Activated CD4-positive, alpha-beta T cell treated with anti-CD3 and anti-CD28 coated beads for 36 hours (primary cell): ENCODE measurements at regions of chr16 and their contacts with region 1.

Region 1: DNA sequence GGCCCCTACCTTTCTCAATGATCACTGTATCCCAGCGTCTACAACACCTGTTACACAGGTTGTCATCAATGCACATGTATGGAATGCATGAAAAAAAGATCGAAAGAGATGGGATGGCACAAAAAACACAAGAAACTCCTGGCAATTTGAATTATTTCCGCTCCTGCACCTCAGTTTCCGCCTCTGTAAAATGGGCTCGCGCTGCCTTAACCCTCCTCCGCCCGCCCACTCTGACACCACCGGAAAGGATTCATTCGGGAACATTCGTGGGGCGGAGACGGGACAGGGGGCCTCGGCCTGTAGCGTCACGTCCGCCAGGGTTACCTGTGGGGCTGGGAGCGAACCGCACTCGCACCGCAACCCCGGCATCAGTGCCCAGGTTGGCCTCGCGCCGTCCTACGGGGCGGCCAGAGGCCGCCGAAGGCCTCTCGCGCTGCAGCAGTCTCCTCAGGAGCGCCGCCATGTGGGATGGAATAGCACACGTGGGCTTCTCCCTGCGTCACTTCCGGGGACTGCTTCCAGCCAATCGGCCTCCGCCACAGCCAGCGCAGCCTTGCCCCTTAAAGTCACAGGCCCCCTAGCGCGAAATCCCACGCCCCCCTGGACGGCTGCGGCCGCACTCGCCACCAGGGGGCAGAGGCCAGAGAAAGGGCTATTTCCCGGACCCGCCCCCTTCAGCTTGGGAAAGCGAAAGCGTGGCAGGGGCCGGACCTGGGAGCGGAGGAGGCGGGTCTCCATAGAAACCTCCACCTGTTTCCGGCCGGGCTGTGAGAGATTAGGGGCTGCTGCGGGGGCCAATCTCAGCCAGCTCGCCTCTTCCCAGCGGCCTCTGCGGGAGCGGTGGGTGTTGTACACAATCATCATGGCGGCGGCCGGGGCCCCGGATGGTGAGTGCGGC is at the starts of genes EARS2 and UBFD1:
- DNase-seq: peak; percentile 99
- ATAC-seq: peak; percentile 92
- H3K4me3 Mint-ChIP-seq: peak within 1 kb of the TSS; percentile 94
- H3K27ac Mint-ChIP-seq: peak within 1 kb of the TSS; percentile 94
- H3K4me1 Mint-ChIP-seq: peaks cover 34% of the 10 kb centered on the region
- H3K27me3 Mint-ChIP-seq: no peaks in the 10 kb centered on the region
- total RNA-seq, gene EARS2: 26.6 to 31.9 TPM
- total RNA-seq, gene UBFD1: 56.8 to 57.2 TPM

Region 2: GRCh38 chr16:23149349-23149996 is 407.7 kb before region 1 on chr16 and contains the start of gene USP31:
- CTCF ChIA-PET with region 1: no interaction called
- POLR2A ChIA-PET with region 1: no interaction called
- intact Hi-C with region 1: loop called in 1 of 2 experiments (anchors 1 kb)
- DNase-seq: peak; percentile 94
- ATAC-seq: peak; percentile 99
- H3K4me3 Mint-ChIP-seq: peak within 1 kb of the TSS; percentile 86
- H3K27ac Mint-ChIP-seq: peak within 1 kb of the TSS; percentile 86
- H3K4me1 Mint-ChIP-seq: peaks cover 28% of the 10 kb centered on the region
- H3K27me3 Mint-ChIP-seq: no peaks in the 10 kb centered on the region
- total RNA-seq, gene USP31: 5.3 to 5.9 TPM

Region 3: GRCh38 chr16:23504451-23505179 is 52.5 kb before region 1 on chr16:
- CTCF ChIA-PET with region 1: no interaction called
- POLR2A ChIA-PET with region 1: interaction called, 5 read pairs
- intact Hi-C with region 1: loop called (anchors 1 to 2 kb)
- DNase-seq: peak; percentile 92
- ATAC-seq: peak; percentile 94
- H3K4me3 Mint-ChIP-seq: peak overlapping the region; percentile 26
- H3K27ac Mint-ChIP-seq: peak overlapping the region; percentile 83
- H3K4me1 Mint-ChIP-seq: peaks cover 77% of the 10 kb centered on the region
- H3K27me3 Mint-ChIP-seq: no peaks in the 10 kb centered on the region

Region 4: GRCh38 chr16:23515881-23516280 is 41.2 kb before region 1 on chr16:
- CTCF ChIA-PET with region 1: no interaction called
- POLR2A ChIA-PET with region 1: no interaction called
- intact Hi-C with region 1: no loop called
- DNase-seq: no peak
- ATAC-seq: no peak
- H3K4me3 Mint-ChIP-seq: no peak overlapping the region
- H3K27ac Mint-ChIP-seq: no peak overlapping the region
- H3K4me1 Mint-ChIP-seq: peaks cover 22% of the 10 kb centered on the region
- H3K27me3 Mint-ChIP-seq: no peaks in the 10 kb centered on the region

Region 5: DNA sequence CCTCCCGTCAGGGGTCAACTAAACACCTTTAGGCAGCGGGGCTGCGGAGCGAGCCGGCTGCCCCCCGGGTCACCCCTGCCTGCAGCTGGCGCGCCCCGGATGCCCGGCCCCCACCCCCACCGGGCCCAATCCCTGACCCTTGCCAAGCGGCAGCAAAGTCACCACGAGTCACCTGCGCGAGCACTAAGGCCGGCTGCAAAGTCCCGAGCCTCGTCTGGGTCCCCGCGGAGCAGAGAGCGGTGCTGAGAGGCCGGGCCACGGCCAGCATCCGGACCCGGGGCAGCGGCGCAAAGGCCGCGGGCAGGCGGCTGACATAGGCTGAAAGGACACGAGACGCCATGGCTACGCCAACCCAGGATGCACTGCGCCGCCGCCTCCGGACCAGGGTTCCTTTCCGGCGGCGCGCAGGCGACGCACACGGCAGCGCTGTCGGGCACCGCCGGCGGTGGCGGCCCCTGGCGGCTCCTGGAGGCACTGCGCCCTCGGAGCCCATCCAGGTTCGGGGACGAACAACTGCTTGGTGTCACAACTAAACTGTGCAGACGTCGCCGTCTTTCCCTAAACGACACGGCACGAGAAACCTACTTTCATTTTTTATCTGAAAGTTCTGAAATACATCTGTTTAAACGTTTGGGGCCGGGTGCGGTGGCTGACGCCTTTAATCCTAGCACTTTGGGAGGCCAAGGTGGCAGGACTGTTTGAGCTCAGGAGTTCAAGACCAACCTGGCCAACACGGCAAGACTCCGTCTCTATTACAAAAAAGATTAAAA is 39.0 kb after region 1 on chr16 and contains the start of gene NDUFAB1:
- CTCF ChIA-PET with region 1: interaction called, 9 read pairs
- POLR2A ChIA-PET with region 1: interaction called, 3 read pairs
- intact Hi-C with region 1: loop called (anchors 1 kb)
- DNase-seq: peak; percentile 96
- ATAC-seq: peak; percentile 97
- H3K4me3 Mint-ChIP-seq: peak within 1 kb of the TSS; percentile 79
- H3K27ac Mint-ChIP-seq: peak within 1 kb of the TSS; percentile 80
- H3K4me1 Mint-ChIP-seq: peaks cover 36% of the 10 kb centered on the region
- H3K27me3 Mint-ChIP-seq: no peaks in the 10 kb centered on the region
- total RNA-seq, gene NDUFAB1: 81.5 to 158 TPM

Region 6: DNA sequence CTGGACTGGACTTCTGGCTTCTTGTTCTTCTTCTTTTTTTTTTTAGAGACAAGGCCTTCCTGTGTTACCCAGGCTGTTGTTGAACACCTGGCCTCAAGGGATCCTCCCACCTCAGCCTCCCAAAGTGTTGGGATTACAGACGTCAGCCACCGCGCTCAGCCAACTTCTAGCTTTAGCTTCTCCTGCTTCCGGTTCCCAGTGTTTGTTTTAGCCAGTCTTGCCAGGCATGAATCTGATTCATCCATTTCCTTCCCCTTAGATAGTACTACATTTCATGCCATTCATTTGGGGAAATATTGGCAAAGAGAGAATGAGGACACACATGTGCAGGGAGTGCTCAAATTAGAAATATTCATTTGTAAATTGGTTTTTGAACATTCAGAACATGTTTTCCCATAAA is 51.1 kb after region 1 on chr16:
- CTCF ChIA-PET with region 1: no interaction called
- POLR2A ChIA-PET with region 1: no interaction called
- intact Hi-C with region 1: no loop called
- DNase-seq: no peak
- ATAC-seq: no peak
- H3K4me3 Mint-ChIP-seq: no peak overlapping the region
- H3K27ac Mint-ChIP-seq: no peak overlapping the region
- H3K4me1 Mint-ChIP-seq: no peaks in the 10 kb centered on the region
- H3K27me3 Mint-ChIP-seq: no peaks in the 10 kb centered on the region

Region 7: DNA sequence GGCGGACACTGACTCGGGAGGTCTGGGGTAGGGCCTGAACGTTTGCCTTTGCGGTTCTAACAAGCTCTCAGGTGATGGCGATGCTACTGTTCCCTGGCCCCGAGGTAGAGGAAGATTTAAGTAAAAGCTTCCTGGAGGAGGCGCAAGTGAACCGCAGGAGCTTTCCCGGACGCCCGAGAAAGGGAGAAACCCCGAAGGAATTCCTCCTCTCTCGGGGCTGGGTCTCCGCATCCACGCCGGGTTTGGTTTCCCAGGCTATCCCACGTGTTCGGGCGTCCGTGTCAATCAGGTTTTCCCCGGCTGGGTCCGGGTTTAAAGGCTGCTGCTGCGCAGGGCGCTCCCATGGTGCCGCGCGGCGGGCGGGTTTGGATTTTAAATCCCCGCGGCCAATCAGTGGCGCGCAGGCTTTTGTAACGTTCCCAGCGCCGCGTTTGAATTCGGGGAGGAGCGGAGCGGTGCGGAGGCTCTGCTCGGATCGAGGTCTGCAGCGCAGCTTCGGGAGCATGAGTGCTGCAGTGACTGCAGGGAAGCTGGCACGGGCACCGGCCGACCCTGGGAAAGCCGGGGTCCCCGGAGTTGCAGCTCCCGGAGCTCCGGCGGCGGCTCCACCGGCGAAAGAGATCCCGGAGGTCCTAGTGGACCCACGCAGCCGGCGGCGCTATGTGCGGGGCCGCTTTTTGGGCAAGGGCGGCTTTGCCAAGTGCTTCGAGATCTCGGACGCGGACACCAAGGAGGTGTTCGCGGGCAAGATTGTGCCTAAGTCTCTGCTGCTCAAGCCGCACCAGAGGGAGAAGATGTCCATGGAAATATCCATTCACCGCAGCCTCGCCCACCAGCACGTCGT is 121.5 kb after region 1 on chr16 and contains the start of gene PLK1:
- CTCF ChIA-PET with region 1: interaction called, 4 read pairs
- POLR2A ChIA-PET with region 1: interaction called, 3 read pairs
- intact Hi-C with region 1: loop called in 1 of 2 experiments (anchors 1 kb)
- DNase-seq: peak; percentile 93
- ATAC-seq: peak; percentile 97
- H3K4me3 Mint-ChIP-seq: peak within 1 kb of the TSS; percentile 95
- H3K27ac Mint-ChIP-seq: peak within 1 kb of the TSS; percentile 60
- H3K4me1 Mint-ChIP-seq: peaks cover 16% of the 10 kb centered on the region
- H3K27me3 Mint-ChIP-seq: no peaks in the 10 kb centered on the region
- total RNA-seq, gene PLK1: 91.4 to 120 TPM

Region 8: DNA sequence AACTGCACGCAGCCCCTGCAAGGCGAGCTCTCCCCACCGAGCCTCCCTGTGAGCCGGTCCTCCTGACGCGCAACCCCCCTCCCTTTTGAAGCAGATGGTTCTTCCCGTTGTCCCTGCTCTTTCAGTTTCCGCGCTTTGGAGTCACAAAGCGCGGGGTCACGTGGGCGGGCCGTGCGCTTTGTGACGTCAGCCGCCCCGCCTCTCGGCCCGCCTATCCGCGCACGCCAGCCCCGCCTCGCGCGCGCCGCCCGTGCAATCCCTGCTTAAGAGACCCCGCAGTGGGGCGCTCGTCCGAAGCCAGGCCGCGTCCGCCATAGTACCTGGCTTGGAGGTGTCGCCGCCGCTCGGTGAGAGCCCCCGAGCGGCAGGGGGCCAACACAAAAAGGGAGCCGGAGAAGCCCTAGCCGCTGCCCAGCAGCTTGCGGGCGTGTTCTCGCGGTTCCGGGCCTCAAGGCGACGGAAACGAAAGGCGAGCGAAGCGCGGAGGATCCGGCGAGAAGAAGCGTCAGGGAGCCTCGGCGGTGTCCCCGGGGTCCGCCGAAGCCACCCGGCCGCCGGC is 982.2 kb after region 1 on chr16 and contains the start of gene RBBP6:
- CTCF ChIA-PET with region 1: no interaction called
- POLR2A ChIA-PET with region 1: no interaction called
- intact Hi-C with region 1: loop called in 1 of 2 experiments (anchors 1 kb)
- DNase-seq: peak; percentile 97
- ATAC-seq: peak; percentile 86
- H3K4me3 Mint-ChIP-seq: peak within 1 kb of the TSS; percentile 90
- H3K27ac Mint-ChIP-seq: peak within 1 kb of the TSS; percentile 100
- H3K4me1 Mint-ChIP-seq: peaks cover 20% of the 10 kb centered on the region
- H3K27me3 Mint-ChIP-seq: no peaks in the 10 kb centered on the region
- total RNA-seq, gene RBBP6: 70.7 to 71.1 TPM